ENCODE measurements at regions of chr17 and their contacts with region 1.

Region 1: GRCh38 chr17:57284984-57285646 is 28.8 kb downstream of the MSI2 start:
- DNase-seq: peak; percentile 74
- H3K4me3 ChIP-seq: no peak overlapping the region
- CTCF ChIP-seq: peak; percentile 20

Region 2: GRCh38 chr17:57106107-57106835 is 178.8 kb before region 1 on chr17:
- in situ Hi-C with region 1: no loop called
- DNase-seq: no peak
- H3K4me3 ChIP-seq: no peak overlapping the region
- CTCF ChIP-seq: peak; percentile 35

Region 3: DNA sequence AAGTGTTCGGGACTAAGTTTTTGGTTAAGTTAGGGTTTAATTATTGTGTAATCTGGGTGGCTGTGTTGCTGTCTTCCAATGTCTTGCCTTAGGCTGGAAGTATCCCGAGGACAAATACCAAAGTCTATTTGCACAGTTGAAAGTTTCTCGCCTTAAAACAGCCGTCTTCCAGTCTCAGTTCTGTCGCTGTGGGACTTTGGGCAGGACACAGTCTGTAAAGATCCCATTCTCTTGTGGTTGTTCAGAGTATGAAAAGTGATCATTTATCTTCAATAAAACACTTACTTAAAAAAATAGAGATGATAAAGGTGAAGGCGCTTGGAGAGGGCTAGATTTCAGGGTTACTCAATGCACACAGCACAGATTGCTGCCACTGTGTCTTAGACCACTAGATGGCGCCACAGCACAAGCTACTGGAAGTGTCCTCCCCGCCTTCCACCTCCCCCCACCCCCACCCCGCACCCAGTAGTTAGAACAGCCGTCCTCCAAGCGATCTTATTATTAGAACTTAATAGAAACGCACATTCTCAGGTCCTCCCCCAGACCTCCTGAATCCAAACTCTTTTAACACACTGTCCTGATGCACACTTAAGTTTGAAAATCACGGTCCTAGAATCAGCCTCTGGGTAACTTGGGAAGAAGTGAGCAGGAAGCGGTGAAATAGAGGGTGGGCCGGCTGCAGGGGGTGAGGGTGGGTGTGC is 154.2 kb before region 1 on chr17:
- in situ Hi-C with region 1: no loop called
- DNase-seq: peak; percentile 55
- H3K4me3 ChIP-seq: peak overlapping the region; percentile 21
- CTCF ChIP-seq: peak; percentile 76

Region 4: GRCh38 chr17:57379895-57380434 is 94.8 kb after region 1 on chr17:
- in situ Hi-C with region 1: loop called (anchors 5 kb)
- DNase-seq: no peak
- H3K4me3 ChIP-seq: no peak overlapping the region
- CTCF ChIP-seq: no peak

Measured in astrocyte of the cerebellum (primary cell).